Activated naive CD4-positive, alpha-beta T cell treated with anti-CD3 and anti-CD28 coated beads for 36 hours (primary cell): ENCODE measurements at regions of chr7 and their contacts with region 1.

Region 1: DNA sequence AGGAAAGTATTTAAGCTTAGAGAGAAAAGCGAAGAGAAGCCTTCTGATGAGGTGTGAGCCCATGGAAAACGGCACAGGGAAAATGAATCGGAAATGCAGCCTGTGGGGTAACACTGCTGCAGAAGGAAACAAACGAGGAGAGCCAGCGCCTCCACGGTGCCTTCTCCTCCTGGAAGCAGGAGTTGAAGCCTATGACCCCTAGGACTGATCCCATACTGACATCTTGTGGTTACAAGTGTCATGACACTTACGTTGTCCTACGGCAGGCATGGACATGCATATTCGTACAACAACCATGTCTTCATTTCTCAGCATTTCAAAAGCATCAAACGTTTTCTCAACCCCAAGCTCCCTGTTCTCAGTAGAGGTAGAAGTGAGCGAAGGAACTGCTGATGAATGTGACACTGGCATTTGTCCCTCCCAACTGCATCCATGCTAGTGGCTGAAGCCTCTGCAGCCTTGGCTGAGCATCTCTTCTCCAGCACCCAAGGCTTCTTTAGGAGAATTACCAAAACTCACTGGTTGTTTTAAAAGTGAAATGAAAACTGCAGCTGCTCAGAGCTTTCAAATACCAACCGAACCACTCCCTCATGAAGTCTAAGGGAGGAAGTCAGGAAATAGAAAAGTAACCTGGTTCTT is 160.2 kb downstream of the JAZF1 start:
- DNase-seq: peak; percentile 60
- H3K4me3 Mint-ChIP-seq: no peak overlapping the region
- H3K27ac Mint-ChIP-seq: no peak overlapping the region
- H3K4me1 Mint-ChIP-seq: no peaks in the 10 kb centered on the region
- H3K27me3 Mint-ChIP-seq: no peaks in the 10 kb centered on the region

Region 2: GRCh38 chr7:27689591-27690164 is 330.7 kb before region 1 on chr7:
- CTCF ChIA-PET with region 1: no interaction called
- intact Hi-C with region 1: loop called (anchors 1 kb)
- DNase-seq: peak; percentile 39
- H3K4me3 Mint-ChIP-seq: no peak overlapping the region
- H3K27ac Mint-ChIP-seq: no peak overlapping the region
- H3K4me1 Mint-ChIP-seq: no peaks in the 10 kb centered on the region
- H3K27me3 Mint-ChIP-seq: peaks cover 4% of the 10 kb centered on the region

Region 3: GRCh38 chr7:27709137-27710075 is 311.0 kb before region 1 on chr7:
- CTCF ChIA-PET with region 1: no interaction called
- intact Hi-C with region 1: no loop called
- DNase-seq: no peak
- H3K4me3 Mint-ChIP-seq: no peak overlapping the region
- H3K27ac Mint-ChIP-seq: no peak overlapping the region
- H3K4me1 Mint-ChIP-seq: no peaks in the 10 kb centered on the region
- H3K27me3 Mint-ChIP-seq: peaks cover 5% of the 10 kb centered on the region

Region 4: DNA sequence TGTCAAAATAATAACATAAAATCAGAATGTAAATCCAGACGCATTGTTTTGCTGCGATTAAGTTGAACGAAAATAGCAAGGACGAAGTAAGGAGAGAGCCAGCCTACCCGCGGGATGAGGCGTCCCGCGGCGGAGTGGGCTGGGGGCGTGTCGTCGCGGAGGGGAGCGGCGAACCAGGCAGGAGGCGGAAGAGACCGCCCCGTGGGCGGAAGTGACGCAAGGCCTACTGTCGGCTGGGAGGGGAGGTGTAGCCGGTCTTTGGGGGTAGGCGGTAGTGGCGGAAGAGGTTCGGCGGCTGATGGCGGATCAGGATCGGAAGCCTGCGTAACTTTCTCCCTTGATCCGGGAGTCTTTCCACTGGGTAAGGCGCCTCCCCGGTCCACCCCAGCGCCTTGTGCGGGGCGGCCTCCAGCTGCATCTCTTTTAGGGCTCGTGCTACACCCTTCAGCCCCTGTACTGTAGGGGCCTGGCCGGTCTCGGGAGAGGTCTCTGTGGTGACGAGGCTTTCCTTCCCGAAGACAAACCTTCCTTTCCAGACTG is 280.4 kb before region 1 on chr7 and contains the start of gene TAX1BP1:
- CTCF ChIA-PET with region 1: no interaction called
- intact Hi-C with region 1: loop called (anchors 5 kb)
- DNase-seq: peak; percentile 96
- H3K4me3 Mint-ChIP-seq: peak within 1 kb of the TSS; percentile 96
- H3K27ac Mint-ChIP-seq: peak within 1 kb of the TSS; percentile 98
- H3K4me1 Mint-ChIP-seq: peaks cover 35% of the 10 kb centered on the region
- H3K27me3 Mint-ChIP-seq: no peaks in the 10 kb centered on the region
- total RNA-seq, gene TAX1BP1: 84.1 to 87.9 TPM

Region 5: DNA sequence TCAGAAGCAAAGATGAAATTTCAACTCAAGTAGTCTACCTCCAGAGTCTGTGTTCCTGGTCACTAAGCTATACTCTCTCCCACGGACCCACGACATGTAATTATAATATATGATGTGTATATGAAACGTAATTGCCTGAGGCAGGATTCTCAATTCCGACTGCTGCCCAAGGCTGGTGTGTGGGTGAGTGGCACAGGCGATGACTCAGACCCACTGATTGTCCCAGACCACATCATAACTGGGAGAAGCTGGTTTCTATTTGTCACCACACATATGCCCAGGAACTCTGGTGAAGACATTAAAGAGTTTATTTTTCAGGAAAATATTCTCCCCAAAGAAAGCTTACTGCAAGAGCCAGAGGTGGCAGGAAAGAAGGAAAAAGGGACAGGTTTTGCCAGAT is 59.2 kb before region 1 on chr7:
- CTCF ChIA-PET with region 1: no interaction called
- intact Hi-C with region 1: no loop called
- DNase-seq: no peak
- H3K4me3 Mint-ChIP-seq: no peak overlapping the region
- H3K27ac Mint-ChIP-seq: no peak overlapping the region
- H3K4me1 Mint-ChIP-seq: no peaks in the 10 kb centered on the region
- H3K27me3 Mint-ChIP-seq: peaks cover under 1% of the 10 kb centered on the region

Region 6: DNA sequence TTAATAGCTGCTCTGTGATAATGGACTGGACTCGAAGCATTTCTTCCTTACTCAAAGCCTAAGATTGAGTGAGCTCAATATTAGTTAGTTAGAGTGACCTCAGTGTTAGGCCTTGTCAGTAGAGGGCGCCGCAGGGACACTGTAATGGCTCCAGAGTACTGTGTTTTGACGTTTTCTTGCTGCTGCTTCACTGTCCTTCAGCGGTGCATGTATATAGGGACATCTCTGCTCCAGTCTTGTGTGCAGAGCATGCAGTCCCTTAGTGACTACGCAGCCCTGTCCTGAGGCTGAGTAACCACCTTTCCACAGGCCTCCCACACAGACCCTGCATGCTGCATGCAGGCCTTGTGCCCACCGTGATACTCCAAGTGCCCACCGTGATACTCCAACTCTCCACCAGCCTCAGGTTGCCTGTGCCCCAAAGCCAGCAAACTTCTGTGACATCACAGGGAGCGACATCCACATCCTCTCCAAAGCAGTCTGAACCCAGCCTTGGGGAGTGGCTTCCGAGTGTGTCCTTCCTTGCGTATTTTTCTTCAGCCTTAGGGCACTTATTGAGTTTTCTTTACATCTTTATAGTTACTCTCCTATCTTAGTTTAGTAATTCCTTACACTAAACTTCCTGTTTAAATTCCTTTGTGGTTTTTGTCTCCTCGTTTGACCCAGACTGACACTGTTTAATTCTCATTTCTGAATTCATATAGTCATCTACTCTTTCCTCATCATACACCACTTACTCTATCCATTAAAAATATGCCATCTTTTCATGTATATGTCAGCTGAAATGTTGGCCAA is 42.0 kb after region 1 on chr7:
- CTCF ChIA-PET with region 1: interaction called, 10 read pairs
- intact Hi-C with region 1: no loop called
- DNase-seq: peak; percentile 74
- H3K4me3 Mint-ChIP-seq: no peak overlapping the region
- H3K27ac Mint-ChIP-seq: no peak overlapping the region
- H3K4me1 Mint-ChIP-seq: peaks cover 3% of the 10 kb centered on the region
- H3K27me3 Mint-ChIP-seq: peaks cover 3% of the 10 kb centered on the region